Mammary epithelial cell (primary cell): ENCODE measurements at regions of chr2 and their contacts with region 1.

Region 1: GRCh38 chr2:163182764-163183354 is 344.3 kb upstream of the KCNH7 start:
- DNase-seq: no peak
- H3K4me3 ChIP-seq: no peak overlapping the region
- H3K27ac ChIP-seq: no peak overlapping the region
- H3K4me1 ChIP-seq: no peaks in the 10 kb centered on the region
- H3K27me3 ChIP-seq: peaks cover 2% of the 10 kb centered on the region
- CTCF ChIP-seq: peak; percentile 60 to 61

Region 2: DNA sequence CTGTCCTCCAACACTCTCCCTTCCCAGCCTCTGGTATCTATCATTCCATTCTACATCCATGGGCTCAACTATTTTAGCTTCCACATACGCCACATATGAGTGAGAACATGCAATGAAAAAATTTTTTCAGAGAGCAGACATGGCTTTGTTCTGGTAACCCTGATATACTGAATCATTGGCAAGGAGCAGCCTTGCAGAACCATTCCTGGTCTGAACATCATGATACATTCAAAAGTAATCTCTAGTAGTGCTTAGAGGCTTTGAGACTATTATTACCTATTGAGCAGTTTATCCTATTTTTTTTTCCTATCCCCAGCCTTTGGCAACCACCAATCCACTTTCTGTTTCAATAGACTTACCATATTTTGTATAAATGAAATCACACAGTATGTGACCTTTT is 48.8 kb after region 1 on chr2:
- CTCF ChIA-PET with region 1: no interaction called
- dilution Hi-C with region 1: no loop called
- in situ Hi-C with region 1: no loop called
- intact Hi-C with region 1: no loop called
- DNase-seq: no peak
- H3K4me3 ChIP-seq: no peak overlapping the region
- H3K27ac ChIP-seq: no peak overlapping the region
- H3K4me1 ChIP-seq: no peaks in the 10 kb centered on the region
- H3K27me3 ChIP-seq: no peaks in the 10 kb centered on the region
- CTCF ChIP-seq: no peak

Region 3: DNA sequence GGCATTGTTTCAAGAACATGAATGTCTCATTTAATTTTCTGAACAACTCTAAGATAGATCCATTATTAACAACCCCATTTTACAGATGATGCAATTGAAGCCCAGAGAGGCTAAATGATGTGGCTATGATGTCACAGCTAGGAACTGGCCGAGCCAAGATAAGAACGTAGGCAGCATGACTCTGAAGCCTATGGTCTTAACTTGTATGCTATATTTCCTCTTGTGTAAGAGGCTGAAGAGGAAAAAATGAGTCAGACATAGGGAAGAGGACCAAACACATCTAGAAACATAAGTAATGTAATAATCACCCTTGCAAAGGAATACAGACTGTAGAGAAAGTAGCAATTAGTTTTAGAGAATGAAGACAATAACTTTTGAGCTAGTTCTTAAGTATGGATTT is 136.1 kb after region 1 on chr2:
- CTCF ChIA-PET with region 1: interaction called, 28 read pairs
- dilution Hi-C with region 1: no loop called
- in situ Hi-C with region 1: no loop called
- intact Hi-C with region 1: no loop called
- DNase-seq: peak; percentile 68
- H3K4me3 ChIP-seq: no peak overlapping the region
- H3K27ac ChIP-seq: no peak overlapping the region
- H3K4me1 ChIP-seq: no peaks in the 10 kb centered on the region
- H3K27me3 ChIP-seq: no peaks in the 10 kb centered on the region
- CTCF ChIP-seq: no peak